Posterior vena cava (tissue), 2 donors: ENCODE measurements at regions of chr3 and their contacts with region 1.

Region 1: DNA sequence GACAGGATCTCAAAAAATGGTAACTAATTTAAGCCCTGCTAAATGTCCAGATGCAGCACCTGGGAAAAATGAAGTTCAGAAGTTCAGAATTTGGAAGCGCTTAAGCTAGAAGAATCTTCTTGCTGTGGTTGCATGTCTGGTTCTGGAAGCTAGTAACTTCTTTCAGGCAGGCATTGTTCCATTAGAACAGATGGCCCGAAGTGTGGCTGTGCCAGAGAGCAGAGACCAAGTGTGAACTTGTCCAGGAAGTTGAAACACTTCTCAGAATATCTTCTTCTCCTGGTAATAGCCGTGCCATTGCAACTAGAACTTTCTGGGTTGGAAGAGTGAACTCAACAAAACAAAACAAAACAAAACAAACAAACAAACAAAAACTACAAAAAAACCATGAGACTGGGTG is 80.0 kb downstream of the MITF start:
- DNase-seq: no peak

Region 2: DNA sequence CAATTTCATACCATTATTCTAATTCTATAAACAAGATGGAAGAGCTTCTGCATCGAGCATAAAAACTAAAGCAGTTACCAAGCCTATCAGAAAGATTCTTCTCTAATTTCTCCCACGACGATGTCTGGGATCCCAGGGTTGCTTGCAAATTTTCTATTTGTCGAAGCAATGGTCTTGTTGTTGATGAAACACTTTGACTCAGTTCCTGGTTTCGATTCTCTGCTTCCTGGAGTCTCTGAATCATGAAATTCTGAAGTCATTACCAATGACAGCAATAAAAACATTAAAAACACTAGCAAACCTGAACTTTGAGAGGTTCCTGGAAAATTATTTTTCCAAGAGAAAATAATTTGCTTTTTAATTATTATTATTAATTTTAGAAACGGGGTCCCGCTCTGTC is 785.8 kb before region 1 on chr3:
- intact Hi-C with region 1: loop called in 1 of 2 experiments (anchors 5 kb)
- DNase-seq: no peak

Region 3: GRCh38 chr3:69306239-69307185 is 512.8 kb before region 1 on chr3:
- intact Hi-C with region 1: loop called in 1 of 2 experiments (anchors 5 kb)
- DNase-seq: peak; percentile 88